ENCODE measurements at regions of chr2 and their contacts with region 1.

Region 1: GRCh38 chr2:42102024-42102590 is 54.3 kb downstream of the PKDCC start:
- DNase-seq: peak in 1 of 2 donors; percentile 36
- ATAC-seq: peak; percentile 35 to 48
- H3K4me3 ChIP-seq: peak overlapping the region; percentile 51 to 65 (median 56)
- H3K27ac ChIP-seq: peak overlapping the region; percentile 55 to 80 (median 72)
- H3K4me1 ChIP-seq: peaks cover 2 to 3% of the 10 kb centered on the region in 2 donors
- H3K27me3 ChIP-seq: no peaks in the 10 kb centered on the region
- CTCF ChIP-seq: no peak
- POLR2A ChIP-seq: no peak

Region 2: DNA sequence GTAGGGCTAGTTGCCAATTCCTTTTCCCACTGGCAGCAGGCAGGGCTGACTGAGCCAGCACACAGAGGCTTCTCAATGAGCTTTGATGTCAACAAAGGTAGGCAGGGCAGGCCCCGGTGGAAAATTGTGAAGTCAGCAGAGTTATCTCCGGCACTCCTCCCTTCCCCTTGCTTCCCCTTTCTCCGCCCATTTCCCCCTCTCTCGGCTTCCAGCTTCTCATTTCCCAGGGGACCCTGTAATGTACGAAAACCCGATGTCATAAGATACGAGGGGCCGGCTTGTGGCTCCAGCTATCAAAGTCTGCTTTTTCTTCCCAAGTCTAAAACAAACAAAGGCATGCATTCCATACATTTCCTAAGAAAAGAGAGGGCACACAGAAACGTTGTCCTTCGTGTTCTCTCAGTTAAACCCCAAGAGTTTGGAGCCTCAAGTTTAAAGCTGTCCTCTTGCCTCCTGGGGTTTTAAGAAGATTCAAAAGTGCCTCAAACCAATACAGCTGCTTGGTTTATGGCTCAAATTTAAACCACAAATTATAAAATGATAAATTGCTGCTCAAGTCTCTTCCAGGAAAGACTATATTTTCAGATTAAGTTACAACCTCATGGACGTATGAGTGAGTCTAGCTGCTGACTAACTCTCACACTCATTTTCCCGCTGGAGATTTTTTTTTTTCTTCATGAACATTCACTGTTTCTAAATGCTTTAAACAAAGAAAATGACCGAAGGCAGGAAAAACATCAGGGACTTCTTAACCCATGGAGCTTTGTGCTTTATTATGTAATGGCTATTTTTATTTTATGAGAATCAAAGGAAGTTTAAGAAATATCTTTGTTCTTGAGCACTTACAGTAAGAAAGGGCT is 39.8 kb after region 1 on chr2:
- in situ Hi-C with region 1: no loop called
- intact Hi-C with region 1: loop called (anchors 5 kb)
- DNase-seq: peak in 1 of 2 donors; percentile 31
- ATAC-seq: peak; percentile 45 to 53
- H3K4me3 ChIP-seq: peak overlapping the region; percentile 16 to 29 (median 23)
- H3K27ac ChIP-seq: peak overlapping the region; percentile 11 to 63 (median 46)
- H3K4me1 ChIP-seq: peaks cover 19 to 25% of the 10 kb centered on the region in 2 donors
- H3K27me3 ChIP-seq: no peaks in the 10 kb centered on the region
- CTCF ChIP-seq: no peak
- POLR2A ChIP-seq: no peak

Region 3: GRCh38 chr2:42153944-42154581 is 52.0 kb after region 1 on chr2:
- in situ Hi-C with region 1: no loop called
- intact Hi-C with region 1: no loop called
- DNase-seq: no peak
- ATAC-seq: no peak
- H3K4me3 ChIP-seq: no peak overlapping the region
- H3K27ac ChIP-seq: no peak overlapping the region
- H3K4me1 ChIP-seq: no peaks in the 10 kb centered on the region
- H3K27me3 ChIP-seq: no peaks in the 10 kb centered on the region
- CTCF ChIP-seq: no peak
- POLR2A ChIP-seq: no peak

Region 4: GRCh38 chr2:42169100-42169873 is 67.2 kb after region 1 on chr2 and contains the start of gene EML4:
- in situ Hi-C with region 1: no loop called
- intact Hi-C with region 1: loop called (anchors 2 kb)
- DNase-seq: peak; percentile 79 to 90
- ATAC-seq: peak; percentile 96
- H3K4me3 ChIP-seq: peak within 1 kb of the TSS; percentile 73 to 92 (median 88)
- H3K27ac ChIP-seq: peak within 1 kb of the TSS; percentile 77 to 83 (median 82)
- H3K4me1 ChIP-seq: peaks cover 12 to 20% of the 10 kb centered on the region in 2 donors
- H3K27me3 ChIP-seq: no peaks in the 10 kb centered on the region
- CTCF ChIP-seq: no peak
- POLR2A ChIP-seq: peak; percentile 58 to 74
- total RNA-seq, gene EML4: 3.0 to 5.0 (median 4.6) TPM